ENCODE measurements at regions of chr2 and their contacts with region 1.

Region 1: GRCh38 chr2:60976875-60977561 is 40.5 kb upstream of the PEX13 start:
- DNase-seq: peak; percentile 29
- H3K4me3 Mint-ChIP-seq: no peak overlapping the region
- H3K27ac Mint-ChIP-seq: peak overlapping the region; percentile 35
- H3K4me1 Mint-ChIP-seq: peaks cover 30% of the 10 kb centered on the region
- H3K27me3 Mint-ChIP-seq: no peaks in the 10 kb centered on the region

Region 2: DNA sequence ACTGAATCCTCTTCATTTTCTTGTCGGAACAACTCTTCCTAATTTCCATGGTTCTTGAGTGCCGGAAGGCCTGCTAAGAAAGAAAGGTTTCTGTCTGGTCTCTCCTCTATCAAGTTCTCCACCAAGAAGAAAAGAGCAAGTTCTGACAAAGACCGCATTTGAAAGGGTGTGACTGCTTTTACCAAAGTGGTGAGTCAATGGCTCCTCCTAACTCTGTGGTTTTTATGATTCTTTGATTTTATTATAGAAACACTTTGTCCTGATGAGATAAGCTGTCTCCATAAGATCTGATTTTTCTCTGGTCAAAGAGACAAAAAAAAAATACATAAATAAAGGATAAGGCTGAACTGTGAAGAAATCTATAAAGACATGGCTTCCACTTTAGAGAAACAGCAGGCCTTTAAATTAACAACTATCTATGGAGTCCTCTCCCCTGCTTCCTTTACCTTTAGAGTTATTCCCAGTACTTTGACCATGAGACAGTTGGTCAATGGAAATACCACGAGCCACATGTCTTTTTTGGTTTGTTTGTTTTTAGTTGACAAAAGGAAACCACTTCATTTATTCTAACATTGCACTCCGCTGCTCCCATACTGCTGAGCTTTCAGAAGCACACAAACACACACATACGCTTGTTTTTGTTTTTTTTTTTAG is 28.0 kb before region 1 on chr2:
- CTCF ChIA-PET with region 1: no interaction called
- POLR2A ChIA-PET with region 1: no interaction called
- intact Hi-C with region 1: no loop called
- DNase-seq: no peak
- H3K4me3 Mint-ChIP-seq: no peak overlapping the region
- H3K27ac Mint-ChIP-seq: no peak overlapping the region
- H3K4me1 Mint-ChIP-seq: peaks cover 11% of the 10 kb centered on the region
- H3K27me3 Mint-ChIP-seq: no peaks in the 10 kb centered on the region

Region 3: DNA sequence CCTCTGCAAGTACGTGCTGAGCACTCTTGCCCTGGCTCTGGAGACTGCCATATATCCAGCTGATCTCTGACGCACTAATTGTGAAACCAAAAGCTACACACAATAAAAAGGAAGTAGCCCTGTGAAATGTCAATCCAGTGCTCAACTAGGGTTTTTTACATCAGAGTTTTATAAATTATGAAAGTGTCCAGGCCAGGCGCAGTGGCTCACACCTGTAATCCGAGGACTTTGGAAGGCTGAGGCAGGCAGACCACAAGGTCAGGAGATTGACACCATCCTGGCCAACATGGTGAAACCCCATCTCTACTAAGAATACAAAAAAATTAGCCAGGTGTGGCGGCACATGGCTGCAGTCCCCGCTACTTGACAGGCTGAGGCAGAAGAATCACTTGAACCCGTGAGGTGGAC is 16.0 kb after region 1 on chr2:
- CTCF ChIA-PET with region 1: interaction called, 4 read pairs
- POLR2A ChIA-PET with region 1: no interaction called
- intact Hi-C with region 1: loop called (anchors 2 kb)
- DNase-seq: peak; percentile 24
- H3K4me3 Mint-ChIP-seq: no peak overlapping the region
- H3K27ac Mint-ChIP-seq: no peak overlapping the region
- H3K4me1 Mint-ChIP-seq: peaks cover 8% of the 10 kb centered on the region
- H3K27me3 Mint-ChIP-seq: no peaks in the 10 kb centered on the region

Measured in activated CD4-positive, alpha-beta memory T cell treated with anti-CD3 and anti-CD28 coated beads for 36 hours (primary cell).